Calu3 (cell line): ENCODE measurements at regions of chr2 and their contacts with region 1.

Region 1: DNA sequence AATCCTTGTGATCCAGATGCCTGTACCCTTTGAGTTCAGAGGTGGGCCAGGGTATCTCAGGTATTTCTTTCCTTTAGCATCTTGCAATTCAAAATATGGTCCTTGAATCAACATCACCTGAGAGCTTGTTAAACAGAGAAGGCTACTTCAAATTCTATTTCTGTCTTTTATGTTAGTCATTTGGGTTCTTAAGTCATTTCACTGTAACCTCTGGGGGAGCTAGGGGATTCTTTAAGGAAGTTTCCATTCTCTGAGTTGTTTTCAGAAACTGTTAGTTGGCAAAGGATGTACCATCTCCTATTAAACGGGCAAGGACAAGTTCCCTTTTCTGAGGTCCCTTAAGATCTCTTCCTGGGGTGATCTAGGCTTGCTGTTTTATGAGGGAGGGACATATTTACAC is 16.6 kb downstream of the CFLAR start:
- DNase-seq: no peak
- H3K4me3 Mint-ChIP-seq: peak overlapping the region; percentile 66
- H3K27ac Mint-ChIP-seq: peak overlapping the region; percentile 99
- H3K4me1 Mint-ChIP-seq: peaks cover 50% of the 10 kb centered on the region
- H3K27me3 Mint-ChIP-seq: no peaks in the 10 kb centered on the region
- CTCF ChIP-seq: no peak

Region 2: DNA sequence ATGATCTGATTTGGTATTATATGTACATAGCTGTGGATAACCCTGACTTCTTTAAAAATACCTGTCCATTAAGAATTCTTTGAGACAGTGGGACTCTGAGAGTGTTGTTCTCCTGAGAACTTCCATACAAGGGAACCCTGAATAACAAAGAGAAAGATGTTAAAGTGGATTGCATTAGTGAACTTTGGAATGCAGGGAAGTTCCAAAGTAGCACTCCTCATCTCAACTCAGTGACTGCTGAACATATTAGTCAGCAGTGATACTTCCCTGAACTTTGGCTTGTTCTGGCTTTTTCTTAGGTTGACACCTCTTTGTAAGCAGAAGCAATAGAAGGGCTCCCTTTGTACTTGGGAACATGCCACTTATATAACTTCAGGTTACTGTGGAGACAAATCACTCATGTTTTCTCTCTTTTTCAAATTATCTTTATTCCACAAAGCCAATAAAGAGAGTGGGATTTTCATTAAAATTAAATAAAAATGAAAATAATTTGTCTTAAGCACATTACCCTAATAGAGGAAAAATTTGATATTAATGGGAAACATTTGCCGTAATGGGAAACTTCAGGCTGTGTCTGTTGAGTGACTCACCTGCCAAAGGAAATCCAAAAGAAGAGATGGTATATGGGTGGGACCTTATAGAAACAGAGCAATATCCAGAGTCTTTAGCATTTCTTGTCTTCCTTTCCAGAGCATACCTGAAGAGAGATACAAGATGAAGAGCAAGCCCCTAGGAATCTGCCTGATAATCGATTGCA is 16.7 kb after region 1 on chr2:
- CTCF ChIA-PET with region 1: interaction called, 3 read pairs
- intact Hi-C with region 1: loop called (anchors 2 kb)
- DNase-seq: peak; percentile 51
- H3K4me3 Mint-ChIP-seq: peak overlapping the region; percentile 62
- H3K27ac Mint-ChIP-seq: peak overlapping the region; percentile 99
- H3K4me1 Mint-ChIP-seq: peaks cover 73% of the 10 kb centered on the region
- H3K27me3 Mint-ChIP-seq: no peaks in the 10 kb centered on the region
- CTCF ChIP-seq: no peak